ENCODE measurements at regions of chr6 and their contacts with region 1.

Region 1: DNA sequence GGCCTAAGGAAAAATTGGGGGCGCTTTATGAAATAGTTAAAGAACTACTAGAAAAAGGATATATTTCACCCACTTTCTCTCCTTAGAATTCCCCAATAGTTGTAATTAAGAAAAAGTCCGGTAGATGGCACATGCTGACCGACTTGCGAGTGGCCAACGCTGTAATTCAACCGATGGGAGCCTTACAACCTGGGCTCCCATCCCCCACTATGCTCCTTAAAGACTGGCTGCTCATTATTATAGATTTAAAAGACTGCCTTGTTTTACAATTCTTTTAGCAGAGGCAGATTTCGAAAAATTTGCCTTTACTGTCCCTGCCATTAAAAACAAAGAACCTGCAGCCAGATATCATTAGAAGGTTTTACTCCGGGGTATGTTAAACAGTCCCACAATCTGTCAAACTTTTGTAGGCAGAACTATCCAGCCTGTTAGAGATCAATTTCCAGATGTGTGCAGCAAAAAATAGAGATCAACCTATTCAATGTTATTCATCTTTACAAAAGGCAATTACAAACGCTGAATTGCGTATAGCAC is 58.5 kb upstream of the PRSS16 start:
- DNase-seq: peak; percentile 88
- H3K4me3 Mint-ChIP-seq: peak overlapping the region; percentile 82
- H3K27ac Mint-ChIP-seq: peak overlapping the region; percentile 53
- H3K4me1 Mint-ChIP-seq: no peaks in the 10 kb centered on the region
- H3K27me3 Mint-ChIP-seq: no peaks in the 10 kb centered on the region
- CTCF ChIP-seq: peak; percentile 80

Region 2: DNA sequence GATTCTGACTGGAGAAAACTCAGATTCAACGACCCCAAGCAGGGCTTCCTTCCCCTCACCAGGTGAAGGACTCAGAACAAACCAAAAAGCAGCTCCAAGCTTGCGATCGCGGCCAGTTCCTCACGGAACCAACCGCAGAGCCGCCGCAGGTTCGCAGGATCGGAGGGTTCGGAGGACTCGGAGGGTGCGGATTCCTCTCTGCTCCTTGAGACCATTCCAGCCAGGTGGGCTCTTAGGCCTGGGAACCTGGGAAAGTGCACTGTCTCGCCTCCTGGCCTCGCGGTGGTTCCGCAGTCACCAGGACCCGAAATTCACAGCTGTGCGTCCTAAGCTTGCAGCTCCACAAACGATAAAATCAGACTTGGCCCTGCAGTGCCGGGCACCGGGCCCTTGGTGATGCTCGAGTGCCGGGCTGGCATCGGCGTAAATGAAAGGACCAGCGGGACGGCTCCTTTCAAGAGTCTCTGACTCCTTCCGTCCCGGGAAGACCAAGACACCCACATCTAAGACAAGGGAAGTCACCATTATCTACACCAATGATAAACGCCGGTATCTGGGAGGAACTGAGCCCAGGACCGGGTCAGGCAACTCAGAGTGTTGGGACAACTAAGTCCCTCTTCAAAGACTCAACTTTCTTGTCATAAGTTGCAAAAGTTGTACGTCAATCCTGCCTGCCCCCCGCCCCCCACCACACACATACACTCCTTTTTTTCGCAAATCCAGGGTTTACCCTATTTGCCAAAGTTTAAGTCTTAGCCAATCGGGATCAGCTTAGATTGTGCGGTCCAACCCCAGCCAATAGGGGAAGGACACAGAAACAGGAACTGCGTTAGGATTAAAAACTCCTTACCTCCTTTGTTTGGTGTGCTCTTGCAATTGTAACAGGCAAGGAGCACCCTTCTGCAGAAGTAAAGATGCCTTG is 11.2 kb before region 1 on chr6:
- CTCF ChIA-PET with region 1: interaction called, 6 read pairs
- POLR2A ChIA-PET with region 1: interaction called, 50 read pairs
- intact Hi-C with region 1: no loop called
- DNase-seq: peak; percentile 92
- H3K4me3 Mint-ChIP-seq: peak overlapping the region; percentile 87
- H3K27ac Mint-ChIP-seq: peak overlapping the region; percentile 92
- H3K4me1 Mint-ChIP-seq: no peaks in the 10 kb centered on the region
- H3K27me3 Mint-ChIP-seq: no peaks in the 10 kb centered on the region
- CTCF ChIP-seq: peak; percentile 36

Region 3: GRCh38 chr6:27251606-27252251 is 62.8 kb after region 1 on chr6:
- CTCF ChIA-PET with region 1: no interaction called
- POLR2A ChIA-PET with region 1: interaction called, 11 read pairs
- intact Hi-C with region 1: no loop called
- DNase-seq: peak; percentile 90
- H3K4me3 Mint-ChIP-seq: peak overlapping the region; percentile 99
- H3K27ac Mint-ChIP-seq: peak overlapping the region; percentile 84
- H3K4me1 Mint-ChIP-seq: no peaks in the 10 kb centered on the region
- H3K27me3 Mint-ChIP-seq: no peaks in the 10 kb centered on the region
- CTCF ChIP-seq: peak; percentile 57

Region 4: GRCh38 chr6:27503436-27504030 is 314.6 kb after region 1 on chr6:
- CTCF ChIA-PET with region 1: no interaction called
- POLR2A ChIA-PET with region 1: interaction called, 7 read pairs
- intact Hi-C with region 1: loop called (anchors 2 kb)
- DNase-seq: peak; percentile 74
- H3K4me3 Mint-ChIP-seq: peak overlapping the region; percentile 83
- H3K27ac Mint-ChIP-seq: peak overlapping the region; percentile 84
- H3K4me1 Mint-ChIP-seq: peaks cover 11% of the 10 kb centered on the region
- H3K27me3 Mint-ChIP-seq: no peaks in the 10 kb centered on the region
- CTCF ChIP-seq: no peak

Region 5: DNA sequence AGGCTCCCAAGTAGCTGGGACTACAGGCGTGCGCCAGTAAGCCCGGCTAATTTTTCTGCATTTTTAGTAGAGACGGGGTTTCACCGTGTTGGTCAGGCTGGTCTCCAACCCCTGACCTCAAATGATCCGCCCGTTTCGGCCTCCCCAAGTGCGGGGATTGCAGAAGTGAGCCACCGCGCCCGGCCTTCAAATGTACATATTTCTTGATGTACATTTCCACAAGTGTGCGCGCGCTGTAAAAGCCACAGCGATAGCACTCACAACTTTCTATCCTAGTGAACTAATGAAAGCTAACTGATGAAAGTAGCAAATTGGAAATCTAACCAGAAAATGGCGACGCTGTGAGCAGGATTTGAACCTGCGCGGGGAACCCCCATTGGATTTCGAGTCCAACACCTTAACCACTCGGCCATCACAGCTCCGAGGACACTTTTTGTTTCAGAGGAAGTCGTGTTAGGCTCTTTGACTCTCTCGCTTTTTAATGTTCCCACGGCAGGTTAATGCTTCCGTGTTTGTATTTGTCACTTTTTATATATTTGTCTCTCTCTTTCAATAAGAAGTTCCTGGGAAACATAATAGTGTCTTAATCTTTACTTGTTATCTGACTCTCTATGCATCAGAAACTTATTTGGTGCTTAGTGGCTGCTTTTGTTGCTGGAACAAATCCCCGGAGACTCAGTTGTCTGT is 483.3 kb after region 1 on chr6:
- CTCF ChIA-PET with region 1: no interaction called
- POLR2A ChIA-PET with region 1: no interaction called
- intact Hi-C with region 1: loop called (anchors 5 kb)
- DNase-seq: peak; percentile 84
- H3K4me3 Mint-ChIP-seq: peak overlapping the region; percentile 76
- H3K27ac Mint-ChIP-seq: peak overlapping the region; percentile 77
- H3K4me1 Mint-ChIP-seq: peaks cover 12% of the 10 kb centered on the region
- H3K27me3 Mint-ChIP-seq: no peaks in the 10 kb centered on the region
- CTCF ChIP-seq: no peak